ENCODE measurements at regions of chr12 and their contacts with region 1.

Region 1: DNA sequence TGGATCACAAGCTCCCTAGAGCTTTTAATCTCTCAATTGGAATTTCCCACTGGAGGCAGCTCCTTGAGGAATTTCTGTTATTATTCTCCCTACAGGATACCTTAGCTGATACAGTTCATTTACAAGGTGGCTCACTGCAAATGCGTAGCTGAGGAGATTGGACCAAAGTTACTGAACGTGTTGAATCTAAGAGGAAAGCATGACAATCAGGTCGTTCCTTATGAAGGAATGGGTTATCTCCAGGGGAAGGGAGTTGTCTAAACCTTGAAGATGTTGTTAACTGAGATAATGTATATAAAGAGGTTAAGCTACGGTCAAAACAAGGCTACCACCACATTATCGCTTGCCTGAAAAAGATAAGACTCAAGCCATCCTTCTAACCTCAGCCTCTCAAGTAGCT is 105.8 kb upstream of the TBX3 start:
- DNase-seq: no peak
- ATAC-seq: no peak

Region 2: DNA sequence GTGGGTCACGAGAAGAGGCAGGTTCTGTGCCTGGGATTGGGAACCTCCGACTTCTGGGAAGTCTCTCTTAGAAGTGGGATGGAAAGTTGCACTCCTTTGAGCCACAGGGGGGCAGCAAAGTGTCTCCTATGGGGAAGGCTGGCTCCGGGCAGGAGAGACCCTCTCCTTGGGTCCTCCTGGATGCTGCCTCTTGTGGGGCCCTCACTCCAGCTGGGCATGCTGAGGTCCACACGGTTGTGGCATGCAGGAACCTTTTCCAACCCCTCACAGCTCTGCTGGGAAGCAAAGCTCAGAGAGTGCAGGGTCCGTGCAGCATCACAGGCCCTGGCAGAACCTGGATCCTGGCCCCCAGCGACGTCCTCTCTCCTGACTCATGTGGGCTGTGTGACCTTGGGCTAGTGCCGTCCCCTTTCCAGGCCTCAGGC is 1350.2 kb before region 1 on chr12:
- intact Hi-C with region 1: loop called (anchors 5 kb)
- DNase-seq: no peak
- ATAC-seq: no peak

Region 3: DNA sequence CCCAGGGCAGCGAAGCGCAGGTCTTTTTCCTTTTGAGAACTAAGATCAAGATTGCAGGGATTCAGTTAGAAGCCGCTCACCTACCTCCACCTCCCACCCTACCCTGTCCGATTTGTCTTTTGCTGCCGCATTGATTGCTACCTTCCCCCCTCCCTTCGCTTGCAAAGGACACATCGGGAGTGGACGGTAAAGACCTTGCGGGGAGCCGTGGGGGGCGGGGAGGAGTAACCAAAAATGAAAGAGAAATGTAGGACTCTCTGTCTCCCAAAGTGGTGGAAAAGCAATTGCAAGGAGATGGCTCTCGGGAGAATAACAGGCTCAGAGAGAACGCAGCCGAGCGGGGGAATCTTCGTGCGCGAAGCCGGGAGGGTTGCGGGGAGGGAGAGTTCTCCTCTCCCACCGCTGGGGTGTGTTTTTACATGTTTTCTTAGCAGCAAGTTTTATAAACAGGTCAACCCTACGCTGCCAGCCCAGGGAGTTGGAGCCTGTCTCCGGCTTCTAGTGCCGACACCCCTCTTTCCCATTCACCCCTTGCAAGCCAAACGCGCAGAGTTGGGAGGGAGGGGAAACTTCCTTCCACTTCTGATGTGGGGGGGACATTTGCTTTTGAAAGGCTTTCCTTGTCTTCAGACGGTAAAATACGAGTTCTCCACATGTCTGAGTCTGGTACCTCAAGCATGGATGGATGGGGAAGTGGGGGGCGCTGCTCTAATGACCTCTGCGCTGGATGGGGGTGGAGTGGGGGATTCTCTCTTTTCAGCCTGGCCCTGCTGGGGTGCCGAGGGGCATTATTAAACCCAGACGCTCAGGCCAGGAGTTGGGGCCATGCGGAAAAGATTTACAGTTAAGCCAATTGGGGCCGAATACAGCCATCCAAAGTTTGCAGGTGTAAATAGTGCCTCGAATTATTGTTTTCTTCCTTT is 97.0 kb before region 1 on chr12:
- intact Hi-C with region 1: no loop called
- DNase-seq: no peak
- ATAC-seq: peak; percentile 21

Measured in sciatic nerve (tissue), 2 donors.